ENCODE measurements at regions of chr12 and their contacts with region 1.

Region 1: GRCh38 chr12:32139064-32139421 is 32.4 kb downstream of the BICD1 start:
- DNase-seq: peak; percentile 67
- H3K4me3 Mint-ChIP-seq: peak overlapping the region; percentile 68
- H3K27ac Mint-ChIP-seq: no peak overlapping the region
- H3K4me1 Mint-ChIP-seq: peaks cover 20% of the 10 kb centered on the region
- H3K27me3 Mint-ChIP-seq: peaks cover 2% of the 10 kb centered on the region

Region 2: GRCh38 chr12:31659087-31659933 is 479.7 kb before region 1 on chr12 and contains the start of gene ETFBKMT:
- CTCF ChIA-PET with region 1: no interaction called
- POLR2A ChIA-PET with region 1: no interaction called
- intact Hi-C with region 1: loop called (anchors 1 kb)
- DNase-seq: peak; percentile 97
- H3K4me3 Mint-ChIP-seq: peak within 1 kb of the TSS; percentile 96
- H3K27ac Mint-ChIP-seq: peak within 1 kb of the TSS; percentile 95
- H3K4me1 Mint-ChIP-seq: peaks cover 7% of the 10 kb centered on the region
- H3K27me3 Mint-ChIP-seq: no peaks in the 10 kb centered on the region
- total RNA-seq, gene ETFBKMT: 1.1 to 1.3 TPM

Region 3: DNA sequence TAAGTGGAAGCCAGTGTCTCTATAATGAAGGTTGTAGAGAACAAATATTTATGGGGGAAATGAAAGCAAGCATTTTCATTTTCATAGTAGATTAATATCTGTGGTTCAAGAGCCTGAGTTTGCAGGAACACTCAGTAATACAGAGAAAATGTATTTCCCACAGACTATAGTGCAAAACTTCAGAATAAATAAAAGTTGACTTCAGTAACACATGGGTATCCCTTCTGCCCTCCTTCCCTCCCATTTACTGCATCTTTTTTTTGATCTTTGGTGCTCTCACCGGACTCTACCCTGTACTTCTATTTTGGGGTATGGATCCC is 334.9 kb before region 1 on chr12:
- CTCF ChIA-PET with region 1: no interaction called
- POLR2A ChIA-PET with region 1: no interaction called
- intact Hi-C with region 1: loop called (anchors 1 kb)
- DNase-seq: no peak
- H3K4me3 Mint-ChIP-seq: peak overlapping the region; percentile 66
- H3K27ac Mint-ChIP-seq: peak overlapping the region; percentile 79
- H3K4me1 Mint-ChIP-seq: peaks cover 47% of the 10 kb centered on the region
- H3K27me3 Mint-ChIP-seq: no peaks in the 10 kb centered on the region

Region 4: GRCh38 chr12:32025906-32026305 is 113.1 kb before region 1 on chr12:
- CTCF ChIA-PET with region 1: no interaction called
- POLR2A ChIA-PET with region 1: no interaction called
- intact Hi-C with region 1: loop called (anchors 1 kb)
- DNase-seq: peak; percentile 80
- H3K4me3 Mint-ChIP-seq: peak overlapping the region; percentile 42
- H3K27ac Mint-ChIP-seq: peak overlapping the region; percentile 74
- H3K4me1 Mint-ChIP-seq: peaks cover 24% of the 10 kb centered on the region
- H3K27me3 Mint-ChIP-seq: no peaks in the 10 kb centered on the region

Region 5: DNA sequence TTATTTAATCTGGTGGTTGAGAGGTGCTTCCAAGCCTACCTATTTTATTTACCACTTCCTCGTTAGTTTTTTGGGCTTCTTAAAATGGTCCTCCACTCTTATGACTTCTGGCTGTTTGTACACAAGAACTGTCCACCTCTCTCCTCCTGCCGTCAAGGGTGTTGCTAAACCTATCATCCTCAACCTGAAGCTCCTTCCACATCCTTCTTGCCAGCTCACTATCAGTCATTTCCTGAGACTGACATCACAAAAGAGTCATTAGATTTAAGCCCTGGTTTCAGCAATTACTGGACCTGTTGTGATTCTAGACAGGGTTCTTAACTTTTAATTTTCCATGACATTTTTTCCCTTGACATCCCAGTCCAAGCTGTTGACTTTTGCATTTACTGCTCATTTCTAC is 59.5 kb after region 1 on chr12:
- CTCF ChIA-PET with region 1: no interaction called
- POLR2A ChIA-PET with region 1: no interaction called
- intact Hi-C with region 1: loop called (anchors 1 kb)
- DNase-seq: peak; percentile 15
- H3K4me3 Mint-ChIP-seq: no peak overlapping the region
- H3K27ac Mint-ChIP-seq: no peak overlapping the region
- H3K4me1 Mint-ChIP-seq: peaks cover 13% of the 10 kb centered on the region
- H3K27me3 Mint-ChIP-seq: no peaks in the 10 kb centered on the region

Region 6: DNA sequence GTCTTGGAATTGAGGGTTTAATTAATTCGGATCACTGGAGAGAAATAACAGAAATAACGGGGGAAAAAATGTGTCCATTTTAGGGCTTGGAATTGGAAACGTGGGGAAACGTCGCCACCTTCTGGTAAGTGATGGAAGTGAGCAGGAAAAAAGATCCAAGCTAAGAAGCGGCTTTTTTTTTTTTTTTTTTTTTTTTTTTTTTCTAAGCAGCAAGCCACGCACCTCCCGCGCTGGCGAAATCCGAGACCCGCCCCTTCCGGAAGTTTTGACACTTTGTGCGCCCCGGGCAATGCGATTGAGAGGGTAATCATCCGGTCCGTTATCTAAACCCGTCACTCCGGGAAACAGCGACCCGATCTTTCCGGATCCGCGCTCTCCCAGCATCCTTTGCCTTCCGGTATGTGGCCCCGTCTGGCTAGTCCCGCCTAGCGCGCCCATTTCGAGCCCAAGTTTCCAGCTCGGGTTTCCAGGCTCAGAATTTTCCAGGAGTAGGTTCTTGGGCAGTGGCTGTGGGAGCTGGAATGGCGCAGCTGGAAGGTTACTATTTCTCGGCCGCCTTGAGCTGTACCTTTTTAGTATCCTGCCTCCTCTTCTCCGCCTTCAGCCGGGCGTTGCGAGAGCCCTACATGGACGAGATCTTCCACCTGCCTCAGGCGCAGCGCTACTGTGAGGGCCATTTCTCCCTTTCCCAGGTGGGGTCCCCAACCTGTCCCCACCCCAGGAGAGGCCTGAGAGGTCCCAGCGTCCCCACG is 1883.2 kb after region 1 on chr12 and contains the start of gene ALG10:
- CTCF ChIA-PET with region 1: no interaction called
- POLR2A ChIA-PET with region 1: no interaction called
- intact Hi-C with region 1: loop called (anchors 5 kb)
- DNase-seq: peak; percentile 97
- H3K4me3 Mint-ChIP-seq: peak within 1 kb of the TSS; percentile 96
- H3K27ac Mint-ChIP-seq: peak within 1 kb of the TSS; percentile 94
- H3K4me1 Mint-ChIP-seq: peaks cover 15% of the 10 kb centered on the region
- H3K27me3 Mint-ChIP-seq: no peaks in the 10 kb centered on the region
- total RNA-seq, gene ALG10: 19.4 to 20.9 TPM

Measured in activated CD4-positive, alpha-beta memory T cell treated with anti-CD3 and anti-CD28 coated beads for 36 hours (primary cell).